Activated CD4-positive, alpha-beta memory T cell treated with anti-CD3 and anti-CD28 coated beads for 36 hours (primary cell): ENCODE measurements at regions of chr1 and their contacts with region 1.

Region 1: GRCh38 chr1:67274623-67275325 is 32.9 kb upstream of the IL12RB2 start:
- DNase-seq: peak; percentile 27
- H3K4me3 Mint-ChIP-seq: no peak overlapping the region
- H3K27ac Mint-ChIP-seq: peak overlapping the region; percentile 75
- H3K4me1 Mint-ChIP-seq: peaks cover 51% of the 10 kb centered on the region
- H3K27me3 Mint-ChIP-seq: peaks cover 2% of the 10 kb centered on the region

Region 2: GRCh38 chr1:67171978-67172377 is 102.8 kb before region 1 on chr1:
- CTCF ChIA-PET with region 1: no interaction called
- POLR2A ChIA-PET with region 1: interaction called, 9 read pairs
- intact Hi-C with region 1: loop called (anchors 1 kb)
- DNase-seq: no peak
- H3K4me3 Mint-ChIP-seq: peak overlapping the region; percentile 74
- H3K27ac Mint-ChIP-seq: peak overlapping the region; percentile 99
- H3K4me1 Mint-ChIP-seq: peaks cover 72% of the 10 kb centered on the region
- H3K27me3 Mint-ChIP-seq: peaks cover 5% of the 10 kb centered on the region

Region 3: DNA sequence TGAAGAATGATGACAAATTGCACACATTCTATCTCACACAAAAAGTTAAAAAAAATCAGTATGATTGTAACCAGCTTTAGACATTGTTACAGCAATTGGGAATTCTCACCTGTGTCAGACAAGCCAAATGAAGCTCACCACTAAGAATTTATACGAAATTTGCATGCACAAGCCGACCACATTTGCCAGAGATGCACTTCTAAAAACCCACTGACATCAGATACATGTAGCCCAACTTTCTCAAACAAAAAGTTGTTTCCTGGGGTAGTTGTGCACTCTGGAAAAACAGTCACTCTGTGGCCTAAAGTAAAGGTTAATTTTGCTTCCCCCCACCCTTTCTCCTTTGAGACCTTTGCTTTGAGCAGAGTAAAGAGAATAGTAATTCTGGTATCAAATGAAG is 35.0 kb before region 1 on chr1:
- CTCF ChIA-PET with region 1: no interaction called
- POLR2A ChIA-PET with region 1: no interaction called
- intact Hi-C with region 1: loop called (anchors 2 kb)
- DNase-seq: no peak
- H3K4me3 Mint-ChIP-seq: no peak overlapping the region
- H3K27ac Mint-ChIP-seq: no peak overlapping the region
- H3K4me1 Mint-ChIP-seq: peaks cover 12% of the 10 kb centered on the region
- H3K27me3 Mint-ChIP-seq: peaks cover 2% of the 10 kb centered on the region

Region 4: DNA sequence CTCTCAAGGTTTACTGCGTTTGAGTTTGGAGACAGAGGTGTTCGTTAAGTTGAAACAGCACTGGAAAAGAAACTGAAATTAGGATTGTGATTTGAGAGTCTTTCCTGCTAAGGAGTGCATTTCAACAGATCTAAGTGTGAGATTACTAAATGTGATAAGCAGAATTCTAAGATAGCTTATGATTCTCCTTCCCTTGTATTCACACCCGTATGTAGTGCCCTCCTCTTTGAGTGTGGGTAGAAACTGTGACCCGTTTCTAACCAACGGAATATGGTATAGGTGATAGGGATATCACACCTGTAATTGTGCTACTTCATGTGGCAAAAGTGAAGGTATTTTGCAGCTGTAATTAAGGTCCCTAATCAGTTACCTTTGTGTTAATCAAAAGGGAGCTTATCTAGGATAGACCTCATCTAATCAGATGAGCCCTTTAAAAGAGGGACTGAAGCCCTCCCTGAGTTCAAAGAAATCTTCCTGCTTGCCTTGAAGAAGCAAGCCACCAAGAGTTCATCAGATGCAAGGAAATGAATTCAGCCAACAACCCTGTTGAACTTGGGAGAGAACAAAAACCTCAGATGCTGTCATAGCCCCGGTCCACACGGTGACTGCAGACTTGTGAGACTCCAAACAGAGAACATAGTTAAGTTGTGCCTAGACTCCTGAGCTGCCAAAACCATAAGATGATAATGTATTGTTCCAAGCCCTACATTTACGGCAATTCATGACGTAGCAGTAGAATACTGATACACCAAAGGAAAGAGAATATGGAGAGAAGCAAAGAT is 20.3 kb after region 1 on chr1:
- CTCF ChIA-PET with region 1: no interaction called
- POLR2A ChIA-PET with region 1: interaction called, 11 read pairs
- intact Hi-C with region 1: no loop called
- DNase-seq: peak; percentile 56
- H3K4me3 Mint-ChIP-seq: no peak overlapping the region
- H3K27ac Mint-ChIP-seq: peak overlapping the region; percentile 72
- H3K4me1 Mint-ChIP-seq: peaks cover 23% of the 10 kb centered on the region
- H3K27me3 Mint-ChIP-seq: peaks cover 10% of the 10 kb centered on the region

Region 5: GRCh38 chr1:67332653-67333529 is 58.1 kb after region 1 on chr1:
- CTCF ChIA-PET with region 1: interaction called, 6 read pairs
- POLR2A ChIA-PET with region 1: interaction called, 32 read pairs
- intact Hi-C with region 1: loop called (anchors 1 kb)
- DNase-seq: no peak
- H3K4me3 Mint-ChIP-seq: peak overlapping the region; percentile 9
- H3K27ac Mint-ChIP-seq: peak overlapping the region; percentile 82
- H3K4me1 Mint-ChIP-seq: peaks cover 80% of the 10 kb centered on the region
- H3K27me3 Mint-ChIP-seq: no peaks in the 10 kb centered on the region

Region 6: DNA sequence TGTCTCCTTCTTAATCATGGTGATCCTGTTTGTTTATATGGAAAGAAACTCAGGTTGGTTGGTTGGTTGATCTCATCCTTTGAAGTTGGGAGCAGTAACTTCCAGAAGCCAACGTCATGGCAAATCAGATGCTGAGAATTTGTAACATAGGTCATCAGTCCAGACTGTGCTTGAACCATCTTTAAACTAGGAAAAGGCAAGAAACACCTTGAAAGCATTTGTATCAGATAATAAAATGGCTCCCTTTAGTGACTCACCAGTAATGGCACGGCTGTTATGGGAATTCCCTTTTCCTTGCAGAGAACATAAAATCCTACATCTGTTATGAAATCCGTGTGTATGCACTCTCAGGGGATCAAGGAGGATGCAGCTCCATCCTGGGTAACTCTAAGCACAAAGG is 97.4 kb after region 1 on chr1:
- CTCF ChIA-PET with region 1: no interaction called
- POLR2A ChIA-PET with region 1: no interaction called
- intact Hi-C with region 1: no loop called
- DNase-seq: no peak
- H3K4me3 Mint-ChIP-seq: no peak overlapping the region
- H3K27ac Mint-ChIP-seq: no peak overlapping the region
- H3K4me1 Mint-ChIP-seq: no peaks in the 10 kb centered on the region
- H3K27me3 Mint-ChIP-seq: no peaks in the 10 kb centered on the region